ENCODE measurements at regions of chr18 and their contacts with region 1.

Region 1: GRCh38 chr18:40738321-40738880 is 1216.6 kb upstream of the PIK3C3 start:
- DNase-seq: no peak
- ATAC-seq: no peak
- H3K4me3 ChIP-seq: no peak overlapping the region
- H3K4me3 Mint-ChIP-seq: no peak overlapping the region
- H3K27ac ChIP-seq: no peak overlapping the region
- H3K27ac Mint-ChIP-seq: no peak overlapping the region
- H3K4me1 ChIP-seq: no peaks in the 10 kb centered on the region
- H3K4me1 Mint-ChIP-seq: no peaks in the 10 kb centered on the region
- H3K27me3 ChIP-seq: no peaks in the 10 kb centered on the region
- H3K27me3 Mint-ChIP-seq: no peaks in the 10 kb centered on the region
- CTCF ChIP-seq: no peak

Region 2: DNA sequence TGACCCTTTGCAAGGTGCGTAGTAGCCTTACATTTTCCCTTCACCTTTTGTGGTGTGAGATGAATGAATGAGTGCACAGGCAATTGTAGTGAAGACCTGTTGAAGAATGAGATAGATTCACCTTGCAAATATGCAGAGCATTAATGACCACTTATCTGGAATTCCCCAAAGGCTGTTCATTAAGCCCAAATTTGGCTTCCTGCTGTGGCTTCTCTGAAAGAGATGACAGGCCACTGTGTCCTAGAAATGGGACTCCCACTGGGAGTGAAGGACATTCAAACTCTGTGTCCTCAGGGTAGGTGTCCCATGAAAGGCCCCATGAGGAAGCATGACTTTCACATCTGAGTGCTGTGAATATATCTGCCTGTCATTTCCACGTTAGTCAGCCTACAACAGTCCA is 605.1 kb before region 1 on chr18:
- CTCF ChIA-PET with region 1: no interaction called
- POLR2A ChIA-PET with region 1: no interaction called
- intact Hi-C with region 1: no loop called
- DNase-seq: no peak
- ATAC-seq: no peak
- H3K4me3 ChIP-seq: no peak overlapping the region
- H3K4me3 Mint-ChIP-seq: no peak overlapping the region
- H3K27ac ChIP-seq: no peak overlapping the region
- H3K27ac Mint-ChIP-seq: no peak overlapping the region
- H3K4me1 ChIP-seq: no peaks in the 10 kb centered on the region
- H3K4me1 Mint-ChIP-seq: no peaks in the 10 kb centered on the region
- H3K27me3 ChIP-seq: no peaks in the 10 kb centered on the region
- H3K27me3 Mint-ChIP-seq: no peaks in the 10 kb centered on the region
- CTCF ChIP-seq: no peak

Region 3: GRCh38 chr18:40450751-40451150 is 287.6 kb before region 1 on chr18:
- CTCF ChIA-PET with region 1: no interaction called
- POLR2A ChIA-PET with region 1: no interaction called
- intact Hi-C with region 1: loop called in 1 of 2 experiments (anchors 10 kb)
- DNase-seq: no peak
- ATAC-seq: no peak
- H3K4me3 ChIP-seq: no peak overlapping the region
- H3K4me3 Mint-ChIP-seq: no peak overlapping the region
- H3K27ac ChIP-seq: no peak overlapping the region
- H3K27ac Mint-ChIP-seq: no peak overlapping the region
- H3K4me1 ChIP-seq: no peaks in the 10 kb centered on the region
- H3K4me1 Mint-ChIP-seq: no peaks in the 10 kb centered on the region
- H3K27me3 ChIP-seq: no peaks in the 10 kb centered on the region
- H3K27me3 Mint-ChIP-seq: no peaks in the 10 kb centered on the region
- CTCF ChIP-seq: no peak

Region 4: GRCh38 chr18:41022484-41022883 is 284.1 kb after region 1 on chr18:
- CTCF ChIA-PET with region 1: no interaction called
- POLR2A ChIA-PET with region 1: no interaction called
- intact Hi-C with region 1: no loop called
- DNase-seq: no peak
- ATAC-seq: no peak
- H3K4me3 ChIP-seq: no peak overlapping the region
- H3K4me3 Mint-ChIP-seq: no peak overlapping the region
- H3K27ac ChIP-seq: no peak overlapping the region
- H3K27ac Mint-ChIP-seq: no peak overlapping the region
- H3K4me1 ChIP-seq: no peaks in the 10 kb centered on the region
- H3K4me1 Mint-ChIP-seq: no peaks in the 10 kb centered on the region
- H3K27me3 ChIP-seq: no peaks in the 10 kb centered on the region
- H3K27me3 Mint-ChIP-seq: no peaks in the 10 kb centered on the region
- CTCF ChIP-seq: no peak

Measured in CD8-positive, alpha-beta T cell (primary cell).